Ovary (tissue), 10 donors: ENCODE measurements at regions of chr10 and their contacts with region 1.

Region 1: DNA sequence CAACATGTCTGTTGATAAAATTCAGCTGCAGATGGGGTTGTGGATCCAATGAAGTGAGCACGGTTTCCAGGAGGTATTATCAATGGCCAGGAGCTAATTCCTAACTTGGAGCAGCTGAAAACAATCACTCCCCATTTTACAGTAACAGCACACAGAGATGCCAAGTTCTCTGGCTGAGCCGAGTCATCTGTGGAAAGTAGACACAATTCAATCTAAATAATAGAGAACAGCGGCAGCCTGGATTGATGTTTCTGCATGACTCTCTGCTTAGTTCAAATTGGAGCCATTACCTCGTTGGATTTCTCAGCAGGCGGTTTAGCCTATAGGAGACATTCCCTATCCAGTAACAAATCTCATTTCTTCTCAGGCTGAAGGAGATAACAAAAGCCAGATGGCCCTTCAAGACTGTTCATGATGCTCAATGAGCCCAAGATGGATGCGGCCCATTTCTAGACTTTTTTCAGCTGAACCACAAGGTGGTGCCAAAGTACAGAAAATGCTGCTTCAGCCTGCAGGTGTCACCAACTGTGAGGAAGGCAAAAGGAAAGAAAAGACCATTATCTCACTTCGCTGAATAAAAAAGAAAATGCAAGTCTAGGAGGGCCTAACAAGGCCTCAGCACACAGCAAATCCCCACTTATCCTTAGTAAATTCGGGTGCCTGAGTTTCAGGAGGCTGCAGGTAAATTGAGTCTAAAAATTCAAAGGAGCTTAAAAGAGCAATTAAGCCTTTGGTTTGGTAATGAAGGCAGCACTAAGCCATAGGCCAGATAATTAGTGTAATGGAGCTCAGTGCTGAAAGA is 83.7 kb downstream of the SLC16A9 start:
- DNase-seq: peak in 4 of 5 donors; percentile 33 to 52 (median 40)
- H3K4me3 ChIP-seq: no peak overlapping the region
- H3K27ac ChIP-seq: peak overlapping the region in 1 of 2 donors; percentile 42
- H3K4me1 ChIP-seq: no peaks in the 10 kb centered on the region
- H3K27me3 ChIP-seq: no peaks in the 10 kb centered on the region
- CTCF ChIP-seq: peak; percentile 73 to 95 (median 89)
- EP300 ChIP-seq: no peak
- POLR2A ChIP-seq: no peak

Region 2: GRCh38 chr10:59234816-59235429 is 391.0 kb before region 1 on chr10:
- intact Hi-C with region 1: loop called in 1 of 4 experiments (anchors 10 kb)
- DNase-seq: peak in 1 of 5 donors; percentile 30
- H3K4me3 ChIP-seq: no peak overlapping the region
- H3K27ac ChIP-seq: no peak overlapping the region
- H3K4me1 ChIP-seq: no peaks in the 10 kb centered on the region
- H3K27me3 ChIP-seq: no peaks in the 10 kb centered on the region
- CTCF ChIP-seq: peak in 2 of 3 donors; percentile 49 to 51
- EP300 ChIP-seq: no peak
- POLR2A ChIP-seq: no peak

Region 3: GRCh38 chr10:59808896-59809643 is 183.1 kb after region 1 on chr10:
- intact Hi-C with region 1: loop called in 2 of 4 experiments (anchors 5 to 10 kb)
- DNase-seq: peak; percentile 62 to 82 (median 77)
- H3K4me3 ChIP-seq: no peak overlapping the region
- H3K27ac ChIP-seq: no peak overlapping the region
- H3K4me1 ChIP-seq: peaks cover 4% of the 10 kb centered on the region
- H3K27me3 ChIP-seq: no peaks in the 10 kb centered on the region
- CTCF ChIP-seq: peak; percentile 8 to 40 (median 34)
- EP300 ChIP-seq: no peak
- POLR2A ChIP-seq: no peak

Region 4: DNA sequence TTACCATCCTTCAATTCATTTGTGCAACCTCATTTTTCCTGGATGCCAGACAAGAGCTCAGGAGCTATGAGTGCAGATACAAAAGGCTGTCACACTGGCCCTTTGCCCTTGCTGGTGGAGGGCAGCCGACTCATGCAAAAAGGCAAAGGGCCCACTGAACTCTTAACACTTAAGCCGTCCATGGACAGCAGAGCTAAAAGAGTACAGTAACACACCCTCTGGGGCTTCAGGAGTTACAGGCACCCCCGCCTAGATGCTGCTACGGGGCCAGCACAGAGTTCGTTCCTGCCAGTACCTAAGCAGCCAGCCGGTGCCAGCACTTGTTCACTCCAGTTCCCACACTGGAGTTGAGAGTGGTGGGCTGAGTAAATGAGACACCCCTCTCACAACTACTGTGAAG is 197.2 kb after region 1 on chr10:
- intact Hi-C with region 1: loop called in 1 of 4 experiments (anchors 5 kb)
- DNase-seq: no peak
- H3K4me3 ChIP-seq: no peak overlapping the region
- H3K27ac ChIP-seq: no peak overlapping the region
- H3K4me1 ChIP-seq: peaks cover 9% of the 10 kb centered on the region
- H3K27me3 ChIP-seq: no peaks in the 10 kb centered on the region
- CTCF ChIP-seq: no peak
- EP300 ChIP-seq: no peak
- POLR2A ChIP-seq: no peak

Region 5: DNA sequence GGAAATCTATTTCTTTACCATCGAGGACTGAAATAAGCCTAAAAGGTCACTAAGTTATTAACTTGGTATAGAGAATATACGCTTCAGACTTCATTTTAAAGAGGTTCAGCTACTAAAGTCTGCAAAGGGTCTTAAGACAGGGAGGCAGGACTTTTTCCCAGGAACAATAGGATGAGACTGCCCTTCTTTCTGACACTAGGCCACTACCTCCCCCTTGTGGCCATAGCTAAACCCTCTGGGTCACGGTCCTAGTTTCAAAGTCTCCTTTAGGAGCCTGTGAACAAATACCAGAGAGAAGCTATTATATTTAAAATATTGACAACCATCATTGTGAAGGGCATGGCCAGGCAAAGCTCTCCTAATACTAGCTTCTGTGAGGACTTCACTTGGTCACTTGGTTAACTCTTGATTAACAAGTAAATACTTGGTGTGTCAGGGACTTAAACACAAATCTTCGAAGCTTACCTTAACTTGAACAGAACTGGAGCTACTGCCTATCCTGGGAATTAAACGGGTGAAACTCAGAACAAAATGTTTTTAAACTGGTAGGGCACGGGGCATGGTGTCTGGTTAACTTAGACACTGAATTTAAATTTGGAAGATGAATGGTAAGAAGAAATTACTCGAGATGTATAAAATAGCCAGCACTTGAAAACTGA is 204.8 kb after region 1 on chr10:
- intact Hi-C with region 1: loop called in 2 of 4 experiments (anchors 2 to 5 kb)
- DNase-seq: peak; percentile 50 to 76 (median 62)
- H3K4me3 ChIP-seq: no peak overlapping the region
- H3K27ac ChIP-seq: no peak overlapping the region
- H3K4me1 ChIP-seq: peaks cover 7% of the 10 kb centered on the region
- H3K27me3 ChIP-seq: no peaks in the 10 kb centered on the region
- CTCF ChIP-seq: peak; percentile 61 to 74 (median 65)
- EP300 ChIP-seq: no peak
- POLR2A ChIP-seq: no peak

Region 6: GRCh38 chr10:59906417-59907202 is 280.7 kb after region 1 on chr10 and contains the start of gene CCDC6:
- intact Hi-C with region 1: loop called in 2 of 4 experiments (anchors 5 to 10 kb)
- DNase-seq: peak; percentile 89 to 94 (median 92)
- H3K4me3 ChIP-seq: peak within 1 kb of the TSS; percentile 95
- H3K27ac ChIP-seq: peak within 1 kb of the TSS; percentile 67 to 93
- H3K4me1 ChIP-seq: peaks cover 13% of the 10 kb centered on the region
- H3K27me3 ChIP-seq: no peaks in the 10 kb centered on the region
- CTCF ChIP-seq: peak; percentile 66 to 86 (median 85)
- EP300 ChIP-seq: no peak
- POLR2A ChIP-seq: peak; percentile 37
- total RNA-seq, gene CCDC6: 22.2 to 46.8 (median 34.2) TPM

Region 7: GRCh38 chr10:60208676-60209269 is 582.9 kb after region 1 on chr10:
- intact Hi-C with region 1: loop called in 1 of 4 experiments (anchors 10 kb)
- DNase-seq: no peak
- H3K4me3 ChIP-seq: no peak overlapping the region
- H3K27ac ChIP-seq: no peak overlapping the region
- H3K4me1 ChIP-seq: no peaks in the 10 kb centered on the region
- H3K27me3 ChIP-seq: no peaks in the 10 kb centered on the region
- CTCF ChIP-seq: peak in 2 of 3 donors; percentile 31 to 71
- EP300 ChIP-seq: no peak
- POLR2A ChIP-seq: no peak